B cell (primary cell): ENCODE measurements at regions of chr1 and their contacts with region 1.

Region 1: DNA sequence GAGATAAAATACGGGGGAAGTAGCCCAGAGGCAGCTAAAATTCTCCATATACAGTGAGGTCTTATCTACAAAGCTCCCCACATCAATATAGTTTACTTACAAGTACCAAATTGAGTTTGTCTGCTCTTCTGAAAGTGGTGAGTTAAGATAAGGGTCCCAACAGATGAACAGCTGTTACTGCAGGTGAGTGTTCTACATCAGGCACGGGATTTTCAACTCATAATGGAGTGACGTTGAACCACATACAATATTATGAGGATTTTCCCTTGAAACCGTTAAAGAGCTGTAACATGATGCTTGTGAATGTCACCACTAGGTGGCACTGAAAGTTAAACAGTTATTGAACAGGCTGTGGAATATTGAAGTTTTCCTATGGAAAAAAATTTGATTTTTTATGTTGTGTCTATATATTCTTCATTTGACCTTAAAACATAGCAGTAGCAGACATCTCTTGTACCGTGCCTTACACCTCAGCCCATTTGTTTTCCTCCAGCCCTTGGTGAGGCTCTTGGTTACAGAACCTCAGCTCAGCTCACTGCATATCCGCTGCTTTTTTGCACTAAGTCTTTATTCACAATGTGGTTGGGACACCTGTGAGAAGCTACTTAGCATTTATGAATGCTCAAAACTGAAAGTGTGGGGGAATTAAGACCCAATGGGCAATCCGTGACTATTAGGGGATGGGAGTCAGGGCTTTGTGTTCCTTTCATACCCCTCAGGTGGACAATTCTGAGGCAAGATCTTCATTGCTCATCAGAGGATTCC is 23.2 kb downstream of the CD1D start:
- DNase-seq: peak; percentile 75
- ATAC-seq: peak; percentile 75
- H3K4me3 ChIP-seq: peak overlapping the region in 4 of 5 experiments; percentile 16 to 42 (median 30)
- H3K4me3 Mint-ChIP-seq: peak overlapping the region; percentile 74
- H3K27ac ChIP-seq: peak overlapping the region; percentile 4 to 72
- H3K27ac Mint-ChIP-seq: peak overlapping the region; percentile 70
- H3K4me1 ChIP-seq: peaks cover 11 to 14% of the 10 kb centered on the region in 2 donors
- H3K4me1 Mint-ChIP-seq: peaks cover 22% of the 10 kb centered on the region
- H3K27me3 ChIP-seq: no peaks in the 10 kb centered on the region
- H3K27me3 Mint-ChIP-seq: no peaks in the 10 kb centered on the region
- CTCF ChIP-seq: peak; percentile 95

Region 2: DNA sequence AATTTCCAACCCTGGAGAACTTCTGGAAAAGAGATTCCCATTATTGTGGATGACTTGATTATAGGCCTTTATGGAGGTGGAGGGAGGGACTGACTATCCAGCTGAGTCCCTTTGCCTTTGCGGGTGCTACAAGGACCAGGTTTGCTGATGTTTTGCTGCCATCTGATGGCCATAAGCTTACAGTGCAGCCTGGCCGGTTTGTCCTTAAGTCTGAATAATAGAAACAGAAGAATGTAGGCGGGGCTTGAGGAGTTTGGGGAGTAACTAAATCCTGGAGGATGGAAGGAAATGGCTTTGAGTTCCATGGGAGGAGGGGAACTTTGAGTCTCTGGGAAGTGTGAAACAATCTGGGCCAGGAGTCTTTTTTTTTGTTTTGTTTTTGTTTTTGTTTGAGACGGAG is 78.9 kb before region 1 on chr1:
- CTCF ChIA-PET with region 1: interaction called, 89 read pairs
- POLR2A ChIA-PET with region 1: no interaction called
- intact Hi-C with region 1: no loop called
- DNase-seq: peak; percentile 86
- ATAC-seq: peak; percentile 89
- H3K4me3 ChIP-seq: no peak overlapping the region
- H3K4me3 Mint-ChIP-seq: no peak overlapping the region
- H3K27ac ChIP-seq: no peak overlapping the region
- H3K27ac Mint-ChIP-seq: peak overlapping the region; percentile 5
- H3K4me1 ChIP-seq: peaks cover 0 to 5% of the 10 kb centered on the region in 2 donors
- H3K4me1 Mint-ChIP-seq: peaks cover 3% of the 10 kb centered on the region
- H3K27me3 ChIP-seq: peaks cover 0 to 18% (median 9%) of the 10 kb centered on the region in 4 experiments
- H3K27me3 Mint-ChIP-seq: peaks cover 25% of the 10 kb centered on the region
- CTCF ChIP-seq: peak; percentile 86

Region 3: DNA sequence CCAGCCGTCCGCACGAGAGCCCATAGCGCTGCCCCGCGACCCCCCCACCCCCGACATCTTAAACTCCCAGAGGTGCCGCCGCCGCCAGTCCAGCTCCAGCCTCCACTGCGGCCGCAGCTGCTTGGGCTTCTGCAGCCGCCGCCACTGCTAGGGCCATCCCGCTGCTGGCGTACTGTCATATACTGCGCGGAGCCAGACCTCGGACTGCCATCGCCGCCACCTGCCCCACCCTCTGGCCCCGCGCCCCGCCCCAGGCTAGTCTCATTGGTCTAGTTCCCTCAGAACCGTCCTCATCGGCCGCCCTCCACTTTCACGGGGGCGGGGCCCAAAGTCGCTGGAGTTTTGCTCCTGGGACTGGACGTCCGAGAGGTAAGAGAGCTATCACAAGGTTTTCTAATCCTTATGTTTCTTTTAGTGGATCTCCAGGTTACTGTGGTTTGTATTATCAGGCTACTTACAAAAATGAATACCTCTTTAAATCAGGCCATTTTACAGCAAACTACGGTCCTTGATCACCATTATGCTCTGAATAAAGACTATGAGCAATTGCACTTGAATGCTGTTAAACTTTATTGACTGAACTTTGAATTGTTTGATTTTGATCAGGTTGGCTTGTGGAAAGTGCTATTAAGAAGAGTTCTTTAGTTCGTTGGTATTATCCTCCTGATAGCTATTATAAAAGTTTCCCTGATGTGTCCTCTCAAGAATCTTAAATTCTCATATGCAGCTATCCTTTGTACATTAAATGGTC is 26.0 kb before region 1 on chr1:
- CTCF ChIA-PET with region 1: interaction called, 61 read pairs
- POLR2A ChIA-PET with region 1: interaction called, 5 read pairs
- intact Hi-C with region 1: no loop called
- DNase-seq: peak; percentile 65
- ATAC-seq: peak; percentile 69
- H3K4me3 ChIP-seq: peak overlapping the region; percentile 39 to 62 (median 50)
- H3K4me3 Mint-ChIP-seq: peak overlapping the region; percentile 82
- H3K27ac ChIP-seq: peak overlapping the region; percentile 22 to 53
- H3K27ac Mint-ChIP-seq: peak overlapping the region; percentile 86
- H3K4me1 ChIP-seq: peaks cover 58 to 72% of the 10 kb centered on the region in 2 donors
- H3K4me1 Mint-ChIP-seq: peaks cover 73% of the 10 kb centered on the region
- H3K27me3 ChIP-seq: no peaks in the 10 kb centered on the region
- H3K27me3 Mint-ChIP-seq: no peaks in the 10 kb centered on the region
- CTCF ChIP-seq: no peak

Region 4: DNA sequence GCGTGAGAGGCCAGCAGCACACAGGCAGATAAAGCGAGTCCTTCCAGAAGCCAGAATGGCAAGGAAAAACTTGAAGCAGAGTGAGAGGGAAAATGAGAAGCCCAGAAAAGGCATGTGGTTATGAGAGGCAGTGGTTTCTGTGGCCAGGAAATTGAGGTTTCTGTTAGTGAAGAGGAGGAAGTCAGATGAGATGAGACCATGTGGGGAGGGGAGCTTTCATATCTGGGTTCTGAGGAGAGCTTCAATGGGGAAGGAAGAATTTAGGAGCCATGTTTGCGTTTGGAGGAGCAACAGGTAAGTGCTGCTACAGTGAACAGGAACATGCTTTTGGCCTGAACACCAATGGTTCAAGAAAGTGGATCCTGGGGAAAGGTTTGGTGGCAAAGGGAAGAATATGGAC is 44.2 kb after region 1 on chr1:
- CTCF ChIA-PET with region 1: interaction called, 38 read pairs
- POLR2A ChIA-PET with region 1: no interaction called
- intact Hi-C with region 1: loop called (anchors 10 kb)
- DNase-seq: peak; percentile 88
- ATAC-seq: peak; percentile 84
- H3K4me3 ChIP-seq: peak overlapping the region in 3 of 5 experiments; percentile 16 to 32 (median 26)
- H3K4me3 Mint-ChIP-seq: peak overlapping the region; percentile 49
- H3K27ac ChIP-seq: peak overlapping the region; percentile 40 to 63
- H3K27ac Mint-ChIP-seq: peak overlapping the region; percentile 57
- H3K4me1 ChIP-seq: peaks cover 49 to 51% of the 10 kb centered on the region in 2 donors
- H3K4me1 Mint-ChIP-seq: peaks cover 48% of the 10 kb centered on the region
- H3K27me3 ChIP-seq: no peaks in the 10 kb centered on the region
- H3K27me3 Mint-ChIP-seq: no peaks in the 10 kb centered on the region
- CTCF ChIP-seq: no peak

Region 5: DNA sequence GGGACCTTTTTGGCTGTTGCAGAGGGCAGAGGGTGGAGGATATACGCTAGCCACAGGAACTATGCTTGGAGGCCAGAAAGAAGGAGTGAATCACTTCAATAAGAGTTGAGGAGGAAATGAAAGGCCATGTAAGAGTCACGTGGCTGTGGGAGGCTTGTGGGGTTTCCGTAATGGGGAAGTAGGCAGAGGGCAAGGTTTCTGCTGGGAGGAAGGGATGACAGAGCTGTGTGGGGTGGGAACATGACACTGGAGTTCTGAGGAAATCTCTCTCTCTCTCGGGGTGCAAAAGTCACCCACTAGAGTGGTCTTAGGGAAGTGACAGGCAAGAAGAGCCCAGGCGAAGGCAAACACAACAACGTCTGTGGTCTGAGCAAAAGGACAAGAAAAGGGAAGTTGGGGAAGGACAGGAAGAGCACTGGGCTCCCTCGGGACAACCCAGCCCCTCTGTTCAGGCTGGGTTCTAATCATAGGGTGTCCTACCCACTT is 81.9 kb after region 1 on chr1:
- CTCF ChIA-PET with region 1: interaction called, 12 read pairs
- POLR2A ChIA-PET with region 1: no interaction called
- intact Hi-C with region 1: loop called (anchors 2 kb)
- DNase-seq: peak; percentile 91
- ATAC-seq: peak; percentile 77
- H3K4me3 ChIP-seq: peak overlapping the region; percentile 3 to 59 (median 30)
- H3K4me3 Mint-ChIP-seq: peak overlapping the region; percentile 86
- H3K27ac ChIP-seq: peak overlapping the region; percentile 75 to 79
- H3K27ac Mint-ChIP-seq: peak overlapping the region; percentile 94
- H3K4me1 ChIP-seq: peaks cover 80 to 93% of the 10 kb centered on the region in 2 donors
- H3K4me1 Mint-ChIP-seq: peaks cover 72% of the 10 kb centered on the region
- H3K27me3 ChIP-seq: no peaks in the 10 kb centered on the region
- H3K27me3 Mint-ChIP-seq: no peaks in the 10 kb centered on the region
- CTCF ChIP-seq: no peak

Region 6: GRCh38 chr1:158527190-158527815 is 323.4 kb after region 1 on chr1:
- CTCF ChIA-PET with region 1: interaction called, 45 read pairs
- POLR2A ChIA-PET with region 1: no interaction called
- intact Hi-C with region 1: no loop called
- DNase-seq: peak; percentile 66
- ATAC-seq: no peak
- H3K4me3 ChIP-seq: no peak overlapping the region
- H3K4me3 Mint-ChIP-seq: no peak overlapping the region
- H3K27ac ChIP-seq: no peak overlapping the region
- H3K27ac Mint-ChIP-seq: no peak overlapping the region
- H3K4me1 ChIP-seq: no peaks in the 10 kb centered on the region
- H3K4me1 Mint-ChIP-seq: no peaks in the 10 kb centered on the region
- H3K27me3 ChIP-seq: no peaks in the 10 kb centered on the region
- H3K27me3 Mint-ChIP-seq: peaks cover 30% of the 10 kb centered on the region
- CTCF ChIP-seq: peak; percentile 77

Region 7: GRCh38 chr1:158537609-158538008 is 333.7 kb after region 1 on chr1:
- CTCF ChIA-PET with region 1: no interaction called
- POLR2A ChIA-PET with region 1: no interaction called
- intact Hi-C with region 1: no loop called
- DNase-seq: no peak
- ATAC-seq: no peak
- H3K4me3 ChIP-seq: no peak overlapping the region
- H3K4me3 Mint-ChIP-seq: no peak overlapping the region
- H3K27ac ChIP-seq: no peak overlapping the region
- H3K27ac Mint-ChIP-seq: no peak overlapping the region
- H3K4me1 ChIP-seq: no peaks in the 10 kb centered on the region
- H3K4me1 Mint-ChIP-seq: no peaks in the 10 kb centered on the region
- H3K27me3 ChIP-seq: no peaks in the 10 kb centered on the region
- H3K27me3 Mint-ChIP-seq: peaks cover 8% of the 10 kb centered on the region
- CTCF ChIP-seq: no peak

Region 8: DNA sequence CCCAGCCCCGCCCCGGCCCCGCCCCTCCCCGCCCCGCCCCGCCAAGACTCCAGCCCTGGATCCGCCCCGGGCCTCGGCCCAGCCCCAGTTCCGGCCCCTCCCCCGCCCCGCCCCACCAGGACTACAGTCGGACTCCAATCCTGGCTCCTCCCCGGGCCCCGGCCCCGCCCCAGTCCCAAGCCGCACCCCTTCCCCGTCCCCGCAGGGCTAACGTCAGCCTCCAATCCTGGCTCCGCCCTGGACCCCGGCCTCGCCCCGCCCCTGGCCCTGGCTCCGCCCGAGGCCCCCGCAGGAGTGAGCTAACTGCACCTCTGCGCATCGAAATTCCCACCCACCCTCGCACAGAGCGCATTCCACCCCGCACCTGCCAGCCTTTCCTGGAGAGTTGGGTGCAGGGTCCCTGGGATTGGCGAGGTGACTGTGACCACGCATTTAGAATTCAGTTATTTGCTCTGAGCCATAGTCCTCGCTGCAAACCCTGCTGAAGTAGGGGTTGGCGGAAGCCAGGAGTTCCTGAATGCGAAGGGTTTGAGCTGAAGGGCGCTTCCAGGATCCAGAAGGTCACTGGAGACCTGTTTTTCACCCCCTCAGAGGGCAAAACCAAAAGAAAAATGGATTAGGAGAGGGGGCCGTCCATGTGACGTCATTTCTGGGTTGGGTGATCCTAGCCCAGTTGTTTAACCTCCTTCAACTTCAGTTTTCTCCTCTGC is 1895.1 kb after region 1 on chr1:
- CTCF ChIA-PET with region 1: no interaction called
- POLR2A ChIA-PET with region 1: no interaction called
- intact Hi-C with region 1: no loop called
- DNase-seq: peak; percentile 96
- ATAC-seq: peak; percentile 91
- H3K4me3 ChIP-seq: peak overlapping the region; percentile 63 to 79 (median 72)
- H3K4me3 Mint-ChIP-seq: peak overlapping the region; percentile 88
- H3K27ac ChIP-seq: peak overlapping the region; percentile 95 to 99
- H3K27ac Mint-ChIP-seq: peak overlapping the region; percentile 86
- H3K4me1 ChIP-seq: peaks cover 33 to 45% of the 10 kb centered on the region in 2 donors
- H3K4me1 Mint-ChIP-seq: peaks cover 47% of the 10 kb centered on the region
- H3K27me3 ChIP-seq: no peaks in the 10 kb centered on the region
- H3K27me3 Mint-ChIP-seq: no peaks in the 10 kb centered on the region
- CTCF ChIP-seq: no peak